Activated CD8-positive, alpha-beta T cell treated with anti-CD3 and anti-CD28 coated beads for 36 hours (primary cell): ENCODE measurements at regions of chr12 and their contacts with region 1.

Region 1: GRCh38 chr12:12039897-12040296 is 30.8 kb upstream of the BCL2L14 start:
- DNase-seq: no peak
- ATAC-seq: no peak
- H3K4me3 Mint-ChIP-seq: no peak overlapping the region
- H3K27ac Mint-ChIP-seq: no peak overlapping the region
- H3K4me1 Mint-ChIP-seq: no peaks in the 10 kb centered on the region
- H3K27me3 Mint-ChIP-seq: peaks cover 3% of the 10 kb centered on the region
- CTCF ChIP-seq: no peak

Region 2: DNA sequence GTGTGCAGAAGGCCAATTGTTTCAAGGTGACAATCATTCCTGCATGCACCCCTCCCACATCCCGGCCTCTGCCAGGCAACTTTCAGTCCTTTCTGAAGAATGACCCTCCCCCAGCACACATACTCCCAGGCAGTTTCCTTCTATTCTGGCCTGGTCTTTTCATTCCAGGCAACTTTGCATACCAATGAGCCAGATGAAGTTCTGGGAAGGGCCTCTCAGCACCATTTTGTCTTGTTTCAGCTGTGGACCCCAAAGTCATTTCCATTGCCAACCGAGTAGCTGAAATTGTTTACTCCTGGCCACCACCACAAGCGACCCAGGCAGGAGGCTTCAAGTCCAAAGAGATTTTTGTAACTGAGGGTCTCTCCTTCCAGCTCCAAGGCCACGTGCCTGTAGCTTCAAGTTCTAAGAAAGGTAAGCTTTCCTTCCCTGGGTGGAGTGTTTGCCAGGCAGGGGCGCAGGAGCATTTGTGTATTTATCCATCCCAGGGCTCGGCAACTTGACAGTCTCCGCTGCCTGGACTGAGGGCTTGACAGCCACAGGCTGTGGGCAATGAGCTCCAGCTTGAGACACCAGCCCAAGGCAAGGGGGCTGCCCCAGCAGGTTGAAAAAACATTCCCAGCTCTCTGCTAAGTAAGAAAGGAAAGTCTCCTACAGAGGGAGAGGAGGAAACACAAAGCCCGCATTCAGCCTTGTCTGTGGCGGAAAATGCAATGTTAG is 47.2 kb after region 1 on chr12:
- CTCF ChIA-PET with region 1: no interaction called
- POLR2A ChIA-PET with region 1: no interaction called
- intact Hi-C with region 1: loop called (anchors 5 kb)
- DNase-seq: no peak
- ATAC-seq: no peak
- H3K4me3 Mint-ChIP-seq: no peak overlapping the region
- H3K27ac Mint-ChIP-seq: no peak overlapping the region
- H3K4me1 Mint-ChIP-seq: no peaks in the 10 kb centered on the region
- H3K27me3 Mint-ChIP-seq: peaks cover 1% of the 10 kb centered on the region
- CTCF ChIP-seq: no peak